Naive thymus-derived CD4-positive, alpha-beta T cell (primary cell): ENCODE measurements at regions of chr12 and their contacts with region 1.

Region 1: DNA sequence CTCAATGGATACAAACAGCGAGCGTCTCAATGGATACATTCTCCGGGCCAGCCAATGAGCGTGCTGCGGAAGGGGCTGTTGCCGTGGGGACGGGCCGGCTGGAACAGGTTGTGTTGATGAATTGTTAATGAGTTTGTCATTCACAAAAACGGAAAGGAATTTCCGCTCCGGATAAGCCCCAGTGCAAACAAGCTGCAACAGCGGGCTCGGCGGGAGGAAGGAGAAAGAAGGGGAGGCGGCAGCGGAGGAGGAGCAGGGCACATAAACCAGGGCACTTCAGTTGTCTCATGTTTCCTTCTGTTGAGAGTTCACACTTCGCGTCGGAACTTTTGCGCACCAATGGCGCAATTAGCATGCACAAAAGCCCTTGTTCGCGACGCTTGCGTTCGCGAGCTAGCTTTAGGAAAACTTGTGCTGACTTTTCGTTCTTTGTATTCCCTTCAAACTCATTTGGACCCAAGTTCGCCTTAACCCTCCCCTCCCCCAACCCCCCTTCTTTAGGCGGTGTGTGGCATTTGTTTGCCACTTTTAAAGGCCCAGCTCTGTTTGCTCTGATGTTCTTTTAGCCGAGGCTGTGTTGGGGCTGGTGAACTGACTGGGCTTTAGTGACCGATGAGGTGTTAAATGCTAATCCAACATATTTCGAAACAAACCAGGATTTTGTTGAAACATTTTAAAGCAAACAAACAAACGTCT is at the start of gene DUSP6:
- DNase-seq: peak; percentile 60 to 90 (median 83)
- ATAC-seq: peak; percentile 84
- H3K4me3 ChIP-seq: peak within 1 kb of the TSS; percentile 68
- H3K4me3 Mint-ChIP-seq: peak within 1 kb of the TSS; percentile 88 to 98 (median 90)
- H3K27ac ChIP-seq: peak within 1 kb of the TSS; percentile 35
- H3K27ac Mint-ChIP-seq: peak within 1 kb of the TSS; percentile 35 to 97 (median 79)
- H3K4me1 ChIP-seq: peaks cover 23 to 25% of the 10 kb centered on the region in 2 donors
- H3K4me1 Mint-ChIP-seq: peaks cover 19 to 55% (median 48%) of the 10 kb centered on the region in 7 donors
- H3K27me3 ChIP-seq: no peaks in the 10 kb centered on the region
- H3K27me3 Mint-ChIP-seq: peaks cover 0 to 4% (median 0%) of the 10 kb centered on the region in 5 donors
- total RNA-seq, gene DUSP6: 2.7 to 225 (median 33.8) TPM

Region 2: GRCh38 chr12:88931596-88931995 is 421.0 kb before region 1 on chr12:
- CTCF ChIA-PET with region 1: no interaction called
- POLR2A ChIA-PET with region 1: no interaction called
- intact Hi-C with region 1: no loop called
- DNase-seq: no peak
- ATAC-seq: no peak
- H3K4me3 ChIP-seq: no peak overlapping the region
- H3K4me3 Mint-ChIP-seq: no peak overlapping the region
- H3K27ac ChIP-seq: no peak overlapping the region
- H3K27ac Mint-ChIP-seq: no peak overlapping the region
- H3K4me1 ChIP-seq: no peaks in the 10 kb centered on the region
- H3K4me1 Mint-ChIP-seq: no peaks in the 10 kb centered on the region
- H3K27me3 ChIP-seq: no peaks in the 10 kb centered on the region
- H3K27me3 Mint-ChIP-seq: peaks cover 2 to 13% (median 7%) of the 10 kb centered on the region in 5 donors

Region 3: GRCh38 chr12:89019408-89020120 is 333.1 kb before region 1 on chr12:
- CTCF ChIA-PET with region 1: no interaction called
- POLR2A ChIA-PET with region 1: no interaction called
- intact Hi-C with region 1: loop called (anchors 1 to 2 kb)
- DNase-seq: peak; percentile 27 to 75 (median 60)
- ATAC-seq: peak; percentile 96
- H3K4me3 ChIP-seq: peak overlapping the region; percentile 14
- H3K4me3 Mint-ChIP-seq: no peak overlapping the region
- H3K27ac ChIP-seq: no peak overlapping the region
- H3K27ac Mint-ChIP-seq: no peak overlapping the region
- H3K4me1 ChIP-seq: peaks cover 0 to 8% of the 10 kb centered on the region in 2 donors
- H3K4me1 Mint-ChIP-seq: peaks cover 0 to 29% (median 5%) of the 10 kb centered on the region in 7 donors
- H3K27me3 ChIP-seq: no peaks in the 10 kb centered on the region
- H3K27me3 Mint-ChIP-seq: peaks cover 0 to 13% (median 5%) of the 10 kb centered on the region in 5 donors

Region 4: GRCh38 chr12:89162704-89163261 is 189.9 kb before region 1 on chr12:
- CTCF ChIA-PET with region 1: no interaction called
- POLR2A ChIA-PET with region 1: no interaction called
- intact Hi-C with region 1: loop called in 1 of 2 experiments (anchors 1 kb)
- DNase-seq: peak in 1 of 9 donors; percentile 54
- ATAC-seq: peak; percentile 77
- H3K4me3 ChIP-seq: no peak overlapping the region
- H3K4me3 Mint-ChIP-seq: no peak overlapping the region
- H3K27ac ChIP-seq: no peak overlapping the region
- H3K27ac Mint-ChIP-seq: no peak overlapping the region
- H3K4me1 ChIP-seq: peaks cover 0 to 9% of the 10 kb centered on the region in 2 donors
- H3K4me1 Mint-ChIP-seq: peaks cover 10 to 31% (median 20%) of the 10 kb centered on the region in 7 donors
- H3K27me3 ChIP-seq: no peaks in the 10 kb centered on the region
- H3K27me3 Mint-ChIP-seq: no peaks in the 10 kb centered on the region

Region 5: GRCh38 chr12:89244536-89244935 is 108.1 kb before region 1 on chr12:
- CTCF ChIA-PET with region 1: interaction called, 4 read pairs
- POLR2A ChIA-PET with region 1: interaction called, 6 read pairs
- intact Hi-C with region 1: loop called (anchors 1 to 2 kb)
- DNase-seq: peak in 7 of 9 donors; percentile 28 to 67 (median 56)
- ATAC-seq: peak; percentile 76
- H3K4me3 ChIP-seq: peak overlapping the region; percentile 23
- H3K4me3 Mint-ChIP-seq: peak overlapping the region; percentile 18 to 64 (median 52)
- H3K27ac ChIP-seq: no peak overlapping the region
- H3K27ac Mint-ChIP-seq: peak overlapping the region; percentile 2 to 93 (median 60)
- H3K4me1 ChIP-seq: peaks cover 24 to 28% of the 10 kb centered on the region in 2 donors
- H3K4me1 Mint-ChIP-seq: peaks cover 32 to 56% (median 48%) of the 10 kb centered on the region in 7 donors
- H3K27me3 ChIP-seq: no peaks in the 10 kb centered on the region
- H3K27me3 Mint-ChIP-seq: no peaks in the 10 kb centered on the region

Region 6: GRCh38 chr12:89393551-89394121 is 41.0 kb after region 1 on chr12:
- CTCF ChIA-PET with region 1: no interaction called
- POLR2A ChIA-PET with region 1: no interaction called
- intact Hi-C with region 1: loop called (anchors 1 kb)
- DNase-seq: no peak
- ATAC-seq: peak; percentile 8
- H3K4me3 ChIP-seq: no peak overlapping the region
- H3K4me3 Mint-ChIP-seq: no peak overlapping the region
- H3K27ac ChIP-seq: no peak overlapping the region
- H3K27ac Mint-ChIP-seq: peak overlapping the region in 1 of 9 donors; percentile 24
- H3K4me1 ChIP-seq: peaks cover 8 to 15% of the 10 kb centered on the region in 2 donors
- H3K4me1 Mint-ChIP-seq: peaks cover 21 to 44% (median 38%) of the 10 kb centered on the region in 7 donors
- H3K27me3 ChIP-seq: no peaks in the 10 kb centered on the region
- H3K27me3 Mint-ChIP-seq: no peaks in the 10 kb centered on the region

Region 7: GRCh38 chr12:89470741-89471509 is 118.3 kb after region 1 on chr12:
- CTCF ChIA-PET with region 1: no interaction called
- POLR2A ChIA-PET with region 1: no interaction called
- intact Hi-C with region 1: loop called (anchors 1 to 2 kb)
- DNase-seq: peak in 6 of 9 donors; percentile 28 to 56 (median 46)
- ATAC-seq: peak; percentile 86
- H3K4me3 ChIP-seq: no peak overlapping the region
- H3K4me3 Mint-ChIP-seq: peak overlapping the region in 1 of 10 donors; percentile 35
- H3K27ac ChIP-seq: no peak overlapping the region
- H3K27ac Mint-ChIP-seq: peak overlapping the region in 5 of 9 donors; percentile 12 to 85 (median 48)
- H3K4me1 ChIP-seq: peaks cover 23 to 31% of the 10 kb centered on the region in 2 donors
- H3K4me1 Mint-ChIP-seq: peaks cover 26 to 63% (median 44%) of the 10 kb centered on the region in 7 donors
- H3K27me3 ChIP-seq: no peaks in the 10 kb centered on the region
- H3K27me3 Mint-ChIP-seq: no peaks in the 10 kb centered on the region